ENCODE measurements at regions of chr1 and their contacts with region 1.

Region 1: DNA sequence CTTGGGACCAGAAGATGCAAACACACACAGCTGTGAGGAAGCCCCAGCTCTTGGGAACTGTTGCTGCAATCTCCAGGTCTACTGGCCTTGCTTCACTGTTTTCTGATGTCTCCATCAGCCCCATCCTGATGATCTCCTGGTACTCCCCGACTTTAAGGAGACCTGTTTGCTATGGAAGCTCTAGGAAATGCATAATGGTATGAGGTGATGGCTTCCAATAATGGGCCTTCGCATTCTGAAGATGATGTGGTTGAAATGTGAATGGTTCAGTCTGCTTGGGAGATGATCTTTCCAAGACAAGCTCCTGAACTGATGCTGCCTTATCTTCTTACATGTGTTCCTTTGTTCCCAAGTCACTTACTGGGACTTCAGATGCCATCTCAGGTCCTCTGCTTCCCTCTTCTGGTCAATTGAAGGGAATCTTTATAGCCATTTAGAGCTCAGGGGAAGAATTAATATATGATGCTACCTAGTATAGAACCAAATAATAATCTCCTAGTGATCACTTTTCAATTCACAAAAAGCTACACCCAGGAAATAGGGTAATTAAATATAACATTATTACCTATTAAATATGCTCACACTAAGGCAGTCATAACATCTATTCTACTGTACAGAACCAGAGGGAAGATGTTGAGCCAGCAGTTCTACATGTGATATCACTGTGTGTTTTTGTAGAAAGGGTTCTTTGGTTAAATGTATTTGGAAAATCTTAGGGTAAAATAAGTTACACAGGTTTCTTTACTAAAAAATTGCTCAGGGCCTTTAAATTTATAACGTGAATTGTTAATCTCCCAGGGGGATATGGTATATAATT is 73.9 kb upstream of the VTCN1 start:
- DNase-seq: no peak
- H3K4me3 ChIP-seq: no peak overlapping the region
- H3K27ac ChIP-seq: no peak overlapping the region
- H3K4me1 ChIP-seq: no peaks in the 10 kb centered on the region
- H3K27me3 ChIP-seq: no peaks in the 10 kb centered on the region
- CTCF ChIP-seq: peak; percentile 39 to 72 (median 52)
- POLR2A ChIP-seq: no peak

Region 2: GRCh38 chr1:117128323-117129079 is 156.1 kb before region 1 on chr1:
- intact Hi-C with region 1: loop called (anchors 5 kb)
- DNase-seq: no peak
- H3K4me3 ChIP-seq: no peak overlapping the region
- H3K27ac ChIP-seq: peak overlapping the region; percentile 21 to 36
- H3K4me1 ChIP-seq: no peaks in the 10 kb centered on the region
- H3K27me3 ChIP-seq: no peaks in the 10 kb centered on the region
- CTCF ChIP-seq: peak; percentile 38 to 70 (median 54)
- POLR2A ChIP-seq: no peak

Measured in uterus (tissue), 4 donors.